HEK293 (cell line): ENCODE measurements at regions of chr6 and their contacts with region 1.

Region 1: DNA sequence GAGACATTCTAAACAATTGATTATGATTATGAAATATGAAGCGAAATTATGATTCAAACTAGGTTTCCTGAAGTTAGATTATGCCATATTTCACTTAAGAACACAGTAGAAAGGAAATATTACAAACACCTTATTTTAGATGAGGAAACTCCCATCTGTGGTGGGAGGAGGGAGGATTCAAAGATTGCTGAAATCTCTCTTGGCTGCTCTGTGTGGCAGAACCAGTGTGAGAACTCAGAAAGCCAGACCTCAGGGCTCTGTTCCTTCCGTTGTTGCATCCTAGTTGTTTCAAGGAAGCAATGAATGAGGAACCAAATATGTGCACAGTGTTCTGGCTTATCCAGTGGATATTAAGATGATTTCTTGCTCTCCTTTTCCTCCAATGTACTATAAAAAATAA is 2.1 kb downstream of the TAAR5 start:
- H3K4me3 ChIP-seq: no peak overlapping the region
- H3K27ac ChIP-seq: no peak overlapping the region
- H3K4me1 ChIP-seq: no peaks in the 10 kb centered on the region
- CTCF ChIP-seq: no peak

Region 2: GRCh38 chr6:132598473-132598872 is 11.0 kb after region 1 on chr6:
- CTCF ChIA-PET with region 1: interaction called, 10 read pairs
- POLR2A ChIA-PET with region 1: no interaction called
- H3K4me3 ChIP-seq: no peak overlapping the region
- H3K27ac ChIP-seq: no peak overlapping the region
- H3K4me1 ChIP-seq: peaks cover 7% of the 10 kb centered on the region; the same call in 1 of the 2 replicates
- CTCF ChIP-seq: no peak

Region 3: GRCh38 chr6:132633362-132633761 is 45.9 kb after region 1 on chr6:
- CTCF ChIA-PET with region 1: no interaction called
- POLR2A ChIA-PET with region 1: no interaction called
- H3K4me3 ChIP-seq: no peak overlapping the region
- H3K27ac ChIP-seq: no peak overlapping the region
- H3K4me1 ChIP-seq: no peaks in the 10 kb centered on the region
- CTCF ChIP-seq: no peak